Common myeloid progenitor, CD34-positive (primary cell): ENCODE measurements at regions of chr22 and their contacts with region 1.

Region 1: GRCh38 chr22:41746567-41747400 is 47.5 kb downstream of the MEI1 start:
- DNase-seq: peak; percentile 58 to 69 (median 65)
- H3K4me3 ChIP-seq: no peak overlapping the region
- H3K27ac ChIP-seq: no peak overlapping the region
- H3K4me1 ChIP-seq: peaks cover 0 to 3% (median under 1%) of the 10 kb centered on the region in 4 experiments
- H3K27me3 ChIP-seq: peaks cover 0 to 2% (median 0%) of the 10 kb centered on the region in 5 experiments

Region 2: GRCh38 chr22:41501209-41501608 is 245.6 kb before region 1 on chr22:
- CTCF ChIA-PET with region 1: no interaction called
- POLR2A ChIA-PET with region 1: no interaction called
- DNase-seq: peak; percentile 29 to 51 (median 40)
- H3K4me3 ChIP-seq: no peak overlapping the region
- H3K27ac ChIP-seq: no peak overlapping the region
- H3K4me1 ChIP-seq: no peaks in the 10 kb centered on the region
- H3K27me3 ChIP-seq: no peaks in the 10 kb centered on the region

Region 3: DNA sequence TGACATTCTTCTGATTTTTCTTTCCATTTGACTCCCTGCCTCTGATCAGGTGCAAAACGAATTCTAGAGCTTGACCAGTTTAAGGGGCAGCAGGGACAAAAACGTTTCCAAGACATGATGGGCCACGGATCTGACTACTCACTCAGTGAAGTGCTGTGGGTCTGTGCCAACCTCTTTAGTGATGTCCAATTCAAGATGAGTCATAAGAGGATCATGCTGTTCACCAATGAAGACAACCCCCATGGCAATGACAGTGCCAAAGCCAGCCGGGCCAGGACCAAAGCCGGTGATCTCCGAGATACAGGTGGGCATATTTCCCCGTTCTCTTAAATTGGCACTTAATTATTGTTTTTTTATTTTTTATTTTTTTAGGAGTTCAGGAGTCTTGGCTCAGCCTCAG is 110.3 kb before region 1 on chr22:
- CTCF ChIA-PET with region 1: no interaction called
- POLR2A ChIA-PET with region 1: no interaction called
- DNase-seq: no peak
- H3K4me3 ChIP-seq: no peak overlapping the region
- H3K27ac ChIP-seq: no peak overlapping the region
- H3K4me1 ChIP-seq: no peaks in the 10 kb centered on the region
- H3K27me3 ChIP-seq: no peaks in the 10 kb centered on the region

Region 4: GRCh38 chr22:41732096-41732772 is 14.6 kb before region 1 on chr22:
- CTCF ChIA-PET with region 1: interaction called, 14 read pairs
- POLR2A ChIA-PET with region 1: no interaction called
- DNase-seq: peak in 2 of 3 donors; percentile 17 to 27
- H3K4me3 ChIP-seq: no peak overlapping the region
- H3K27ac ChIP-seq: no peak overlapping the region
- H3K4me1 ChIP-seq: no peaks in the 10 kb centered on the region
- H3K27me3 ChIP-seq: no peaks in the 10 kb centered on the region

Region 5: DNA sequence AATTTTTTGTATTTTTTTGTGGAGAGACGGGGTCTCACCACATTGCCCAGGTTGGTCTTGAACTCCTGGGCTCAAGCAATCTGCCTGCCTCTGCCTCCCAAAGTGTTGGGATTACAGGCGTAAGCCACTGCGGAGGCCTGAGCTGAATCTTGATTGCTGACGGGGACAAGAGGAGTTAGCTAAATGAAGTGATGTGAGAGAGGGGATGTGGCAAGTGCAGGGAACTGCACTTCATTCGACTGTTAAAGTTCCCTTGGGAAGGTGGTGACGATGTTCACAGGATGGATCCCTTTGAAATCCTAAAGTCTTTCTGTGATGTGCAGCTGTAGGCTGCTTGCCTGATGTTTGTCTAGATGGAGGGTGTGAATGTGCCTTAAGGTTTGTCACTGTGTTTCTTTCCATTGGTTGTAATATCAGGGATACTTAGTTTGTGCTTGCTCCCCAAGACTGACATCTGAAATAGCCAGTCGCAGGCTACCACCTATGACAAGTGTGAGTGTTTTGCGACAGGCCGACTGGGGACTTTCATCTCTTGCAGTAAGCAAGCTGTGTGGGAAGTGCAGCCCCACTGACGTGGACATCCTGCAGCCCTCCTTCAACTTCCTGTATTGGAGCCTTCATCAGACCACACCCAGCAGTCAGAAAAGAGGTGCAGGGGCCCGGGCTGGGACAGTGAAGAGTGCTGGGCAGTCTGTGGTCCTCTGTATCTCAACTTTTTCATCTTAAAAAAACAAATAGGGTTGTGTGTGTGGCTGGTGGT is 34.1 kb after region 1 on chr22:
- CTCF ChIA-PET with region 1: interaction called, 14 read pairs
- POLR2A ChIA-PET with region 1: no interaction called
- DNase-seq: peak; percentile 96 to 100 (median 99)
- H3K4me3 ChIP-seq: peak overlapping the region in 5 of 7 experiments; percentile 40 to 67 (median 47)
- H3K27ac ChIP-seq: peak overlapping the region; percentile 14 to 76
- H3K4me1 ChIP-seq: peaks cover 12 to 27% (median 19%) of the 10 kb centered on the region in 4 experiments
- H3K27me3 ChIP-seq: no peaks in the 10 kb centered on the region

Region 6: DNA sequence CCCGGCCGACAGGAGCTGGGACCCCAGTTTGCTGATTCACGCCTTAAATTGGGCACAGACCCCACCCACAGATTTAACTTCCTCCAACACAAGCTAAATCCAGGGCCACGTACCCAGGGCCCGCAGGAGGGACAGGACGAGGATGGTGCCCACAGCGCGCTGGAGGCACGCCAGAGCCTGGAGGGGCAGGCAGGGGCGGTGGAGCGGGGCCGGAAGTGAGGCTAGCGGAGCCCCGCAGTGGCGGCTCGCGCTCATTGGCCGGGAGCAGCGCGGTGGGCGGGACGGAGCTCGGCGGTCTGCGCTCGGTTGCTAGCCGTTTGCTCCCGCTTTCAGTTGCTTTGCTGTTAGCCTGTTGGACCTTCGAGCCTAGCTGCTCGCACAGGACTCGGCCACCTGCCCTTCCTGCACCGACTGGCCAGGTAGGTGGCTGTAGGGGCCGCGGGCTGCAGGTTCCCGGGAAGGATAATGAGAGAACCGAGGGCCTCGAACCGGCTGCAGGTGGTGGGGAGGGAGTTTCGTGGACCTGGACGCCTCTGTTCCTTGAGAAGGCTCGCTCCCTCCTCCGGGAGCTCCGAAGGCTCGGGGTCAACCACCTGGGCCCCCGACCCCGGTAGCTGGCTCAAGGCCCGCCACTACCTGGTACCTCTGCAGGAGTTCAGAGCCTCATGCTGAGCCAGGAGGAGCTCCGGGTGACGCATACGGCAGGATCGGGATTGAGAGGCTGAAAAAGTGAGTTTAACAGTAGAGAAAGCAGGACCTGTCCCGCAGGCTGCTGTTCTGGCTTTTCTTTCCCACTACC is 53.8 kb after region 1 on chr22 and contains the start of gene CCDC134:
- CTCF ChIA-PET with region 1: interaction called, 13 read pairs
- POLR2A ChIA-PET with region 1: interaction called, 3 read pairs
- DNase-seq: peak; percentile 92 to 98 (median 98)
- H3K4me3 ChIP-seq: peak within 1 kb of the TSS; percentile 73 to 98 (median 90)
- H3K27ac ChIP-seq: peak within 1 kb of the TSS; percentile 78 to 90
- H3K4me1 ChIP-seq: peaks cover 3 to 32% (median 26%) of the 10 kb centered on the region in 4 experiments
- H3K27me3 ChIP-seq: no peaks in the 10 kb centered on the region

Region 7: GRCh38 chr22:41822317-41823060 is 75.7 kb after region 1 on chr22:
- CTCF ChIA-PET with region 1: no interaction called
- POLR2A ChIA-PET with region 1: no interaction called
- DNase-seq: peak; percentile 75 to 86 (median 85)
- H3K4me3 ChIP-seq: no peak overlapping the region
- H3K27ac ChIP-seq: no peak overlapping the region
- H3K4me1 ChIP-seq: peaks cover 0 to 3% (median 0%) of the 10 kb centered on the region in 4 experiments
- H3K27me3 ChIP-seq: no peaks in the 10 kb centered on the region

Region 8: GRCh38 chr22:41873391-41873790 is 126.6 kb after region 1 on chr22:
- CTCF ChIA-PET with region 1: no interaction called
- POLR2A ChIA-PET with region 1: no interaction called
- DNase-seq: no peak
- H3K4me3 ChIP-seq: no peak overlapping the region
- H3K27ac ChIP-seq: no peak overlapping the region
- H3K4me1 ChIP-seq: no peaks in the 10 kb centered on the region
- H3K27me3 ChIP-seq: no peaks in the 10 kb centered on the region

Region 9: DNA sequence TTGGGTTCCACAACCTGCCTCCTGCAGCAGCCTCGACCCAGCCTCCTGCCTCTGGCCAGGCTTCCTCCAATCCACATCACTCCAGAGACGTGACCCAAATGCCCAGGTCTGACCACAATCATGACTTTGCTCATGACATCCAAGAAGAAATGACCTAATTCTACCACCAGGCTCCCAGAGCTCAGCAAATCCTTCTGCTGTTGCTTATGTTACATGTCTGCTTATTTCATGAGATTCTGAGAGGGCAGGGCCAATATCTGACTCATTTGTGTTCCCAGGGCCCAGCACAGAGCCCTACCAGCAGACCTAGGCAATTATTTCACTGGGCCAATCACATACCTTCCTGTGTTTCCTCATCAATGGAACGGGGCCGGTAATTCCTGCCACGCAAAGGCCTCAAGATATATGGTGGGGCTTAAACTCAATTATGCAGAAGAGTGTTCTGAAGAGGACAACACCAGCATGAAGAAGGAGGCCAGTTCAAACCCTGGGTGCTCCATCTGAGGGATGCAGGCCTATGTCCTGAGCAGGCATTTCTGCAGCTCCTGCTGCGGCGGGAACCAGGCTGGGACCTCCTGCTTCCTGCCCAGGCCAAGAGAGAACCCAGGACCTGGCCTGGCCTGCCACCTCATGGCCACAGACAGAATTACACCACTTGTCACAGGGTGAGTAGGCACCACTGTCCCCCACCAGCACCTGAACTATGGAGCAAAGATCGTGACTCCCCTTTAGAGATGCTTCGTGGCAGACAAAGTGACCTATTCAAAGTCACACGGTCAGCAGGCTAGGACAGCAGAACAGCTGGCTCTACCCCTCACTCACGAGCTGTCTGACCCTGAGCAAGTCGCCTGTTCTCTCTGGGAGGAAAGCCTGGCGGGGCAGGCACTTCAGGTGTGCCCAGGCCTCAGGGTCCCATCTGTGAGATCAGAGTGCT is 194.3 kb after region 1 on chr22:
- CTCF ChIA-PET with region 1: interaction called, 10 read pairs
- POLR2A ChIA-PET with region 1: no interaction called
- DNase-seq: peak; percentile 79 to 89 (median 87)
- H3K4me3 ChIP-seq: peak overlapping the region in 1 of 7 experiments; percentile 30
- H3K27ac ChIP-seq: peak overlapping the region in 1 of 2 experiments; percentile 54
- H3K4me1 ChIP-seq: peaks cover 0 to 22% (median 14%) of the 10 kb centered on the region in 4 experiments
- H3K27me3 ChIP-seq: no peaks in the 10 kb centered on the region